A673 (cell line): ENCODE measurements at regions of chr1 and their contacts with region 1.

Region 1: GRCh38 chr1:84406346-84406861 is 8.1 kb downstream of the DNASE2B start:
- DNase-seq: no peak
- H3K4me3 ChIP-seq: no peak overlapping the region
- H3K27ac ChIP-seq: no peak overlapping the region
- H3K4me1 ChIP-seq: peaks cover 3% of the 10 kb centered on the region
- H3K27me3 ChIP-seq: no peaks in the 10 kb centered on the region
- CTCF ChIP-seq: no peak

Region 2: GRCh38 chr1:83978056-83978455 is 428.3 kb before region 1 on chr1:
- CTCF ChIA-PET with region 1: no interaction called
- POLR2A ChIA-PET with region 1: interaction called, 11 read pairs
- intact Hi-C with region 1: no loop called
- DNase-seq: peak; percentile 28
- H3K4me3 ChIP-seq: no peak overlapping the region
- H3K27ac ChIP-seq: no peak overlapping the region
- H3K4me1 ChIP-seq: peaks cover 3% of the 10 kb centered on the region
- H3K27me3 ChIP-seq: no peaks in the 10 kb centered on the region
- CTCF ChIP-seq: no peak

Region 3: DNA sequence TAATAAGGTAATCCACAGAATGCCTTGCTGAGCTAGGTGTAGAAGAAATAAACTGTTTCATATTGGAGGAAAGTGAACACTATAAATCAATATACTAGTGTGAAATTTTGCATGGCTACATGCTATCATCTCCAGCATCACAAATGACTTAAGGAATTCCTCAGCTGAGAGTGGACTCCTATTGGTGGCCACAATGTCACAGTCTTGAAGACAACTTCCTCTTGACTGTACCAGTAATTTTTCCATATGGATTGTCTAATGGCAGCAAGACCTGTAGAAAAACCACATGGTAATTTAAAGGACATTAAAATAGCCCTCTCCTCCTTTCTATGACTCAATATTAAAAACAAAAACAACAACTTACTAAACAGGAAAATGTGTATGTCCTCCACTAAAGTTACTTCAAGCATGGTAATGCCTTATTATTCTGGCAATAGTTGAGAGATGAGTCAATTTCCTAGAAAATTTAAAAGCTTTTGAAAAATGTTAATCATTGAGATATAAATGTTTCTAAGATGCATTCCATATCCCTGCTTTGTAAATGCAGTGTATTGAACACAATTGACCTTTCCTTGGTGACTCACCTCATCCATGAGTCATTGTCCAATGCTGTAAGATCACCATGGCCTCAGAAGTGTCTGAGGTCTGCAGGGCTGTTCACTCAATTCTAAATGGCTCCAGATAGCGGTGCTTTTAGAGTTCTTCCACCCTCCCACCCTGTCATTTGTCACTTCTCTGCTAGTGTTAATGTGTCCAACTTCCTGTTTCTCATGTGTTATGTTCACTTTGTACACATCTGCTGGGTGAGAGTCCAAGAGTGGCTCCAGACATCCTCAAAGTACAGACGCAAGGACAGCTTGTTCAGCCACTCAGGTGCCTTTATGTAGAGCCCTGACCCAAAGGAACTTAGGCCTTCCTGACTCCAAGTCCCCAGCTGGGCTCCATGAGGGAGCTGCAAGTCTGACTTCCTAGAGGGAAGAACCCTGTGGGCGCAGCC is 40.9 kb before region 1 on chr1:
- CTCF ChIA-PET with region 1: no interaction called
- POLR2A ChIA-PET with region 1: no interaction called
- intact Hi-C with region 1: no loop called
- DNase-seq: peak; percentile 85
- H3K4me3 ChIP-seq: no peak overlapping the region
- H3K27ac ChIP-seq: no peak overlapping the region
- H3K4me1 ChIP-seq: peaks cover 6% of the 10 kb centered on the region
- H3K27me3 ChIP-seq: no peaks in the 10 kb centered on the region
- CTCF ChIP-seq: no peak